ENCODE measurements at regions of chr15 and their contacts with region 1.

Region 1: DNA sequence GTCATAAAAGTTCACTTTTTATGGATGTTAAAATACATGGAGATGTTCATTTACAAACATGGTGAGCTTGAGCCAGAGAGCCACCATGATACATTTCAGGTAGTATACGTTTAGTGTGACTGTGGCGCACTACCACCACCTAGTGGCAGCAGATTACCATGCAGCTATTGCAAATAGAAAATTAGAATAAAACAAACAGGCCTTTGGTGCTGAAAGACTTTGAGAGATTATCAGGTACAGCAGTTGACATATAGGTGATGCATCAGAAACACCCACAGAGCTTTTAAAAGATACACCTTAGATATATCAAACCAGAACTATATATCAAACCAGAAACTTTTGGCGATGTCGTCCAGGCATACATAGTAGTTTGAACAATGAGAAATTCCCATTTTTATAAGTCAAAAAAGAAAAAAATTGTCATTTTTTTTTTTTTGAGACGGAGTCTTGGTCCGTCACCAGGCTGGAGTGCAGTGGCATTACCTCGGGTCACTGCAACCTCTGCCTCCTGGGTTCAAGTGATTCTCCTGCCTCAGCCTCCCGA is 42.0 kb upstream of the ICE2 start:
- DNase-seq: peak; percentile 68 to 89 (median 78)
- ATAC-seq: peak; percentile 88
- H3K4me3 ChIP-seq: no peak overlapping the region
- H3K4me3 Mint-ChIP-seq: no peak overlapping the region
- H3K27ac ChIP-seq: no peak overlapping the region
- H3K27ac Mint-ChIP-seq: peak overlapping the region; percentile 65
- H3K4me1 ChIP-seq: peaks cover 22% of the 10 kb centered on the region
- H3K4me1 Mint-ChIP-seq: peaks cover 66% of the 10 kb centered on the region
- H3K27me3 ChIP-seq: no peaks in the 10 kb centered on the region
- H3K27me3 Mint-ChIP-seq: no peaks in the 10 kb centered on the region
- CTCF ChIP-seq: peak; percentile 92

Region 2: DNA sequence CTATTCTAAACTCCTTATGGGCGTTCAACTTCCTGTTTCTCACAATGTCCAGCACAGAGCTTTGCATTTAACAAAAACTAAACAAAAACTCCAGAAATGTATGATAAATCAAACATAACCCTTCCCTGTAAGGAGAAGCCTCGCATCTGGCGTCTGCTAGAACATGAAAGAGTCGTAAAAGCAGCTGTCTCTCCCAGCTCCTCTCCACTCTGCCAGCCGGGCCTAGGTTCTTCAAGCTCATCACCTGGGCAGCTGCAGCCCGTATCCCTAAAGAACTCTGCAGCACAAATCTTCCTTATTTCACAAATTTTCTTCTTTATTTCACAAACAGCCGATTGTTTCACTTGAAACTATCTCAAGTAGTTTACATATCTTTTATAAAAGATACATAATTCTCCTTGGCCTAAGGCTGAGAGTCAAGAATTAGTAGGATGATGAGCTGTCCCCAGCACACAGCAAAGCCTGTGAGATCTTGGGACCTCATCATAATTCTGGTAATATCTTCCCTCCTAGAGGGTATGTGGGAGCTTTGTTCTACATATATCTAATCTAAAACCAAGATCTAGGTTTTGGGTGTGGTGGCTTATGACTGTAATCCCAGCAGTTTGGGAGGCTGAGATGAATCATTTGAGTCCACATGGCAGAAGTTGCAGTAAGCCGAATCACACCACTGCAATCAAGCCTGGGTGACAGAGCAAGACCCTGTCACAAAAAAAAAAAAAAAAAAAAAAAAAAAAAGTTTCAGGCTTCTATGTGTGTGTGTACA is 158.4 kb before region 1 on chr15:
- CTCF ChIA-PET with region 1: interaction called, 4 read pairs
- POLR2A ChIA-PET with region 1: no interaction called
- intact Hi-C with region 1: loop called in 1 of 2 experiments (anchors 2 kb)
- DNase-seq: peak in 5 of 14 experiments; percentile 6 to 50 (median 25)
- ATAC-seq: peak; percentile 75
- H3K4me3 ChIP-seq: no peak overlapping the region
- H3K4me3 Mint-ChIP-seq: no peak overlapping the region
- H3K27ac ChIP-seq: no peak overlapping the region
- H3K27ac Mint-ChIP-seq: peak overlapping the region; percentile 62
- H3K4me1 ChIP-seq: peaks cover 15% of the 10 kb centered on the region
- H3K4me1 Mint-ChIP-seq: peaks cover 19% of the 10 kb centered on the region
- H3K27me3 ChIP-seq: no peaks in the 10 kb centered on the region
- H3K27me3 Mint-ChIP-seq: no peaks in the 10 kb centered on the region
- CTCF ChIP-seq: no peak

Region 3: GRCh38 chr15:60536314-60536713 is 15.4 kb after region 1 on chr15:
- CTCF ChIA-PET with region 1: interaction called, 16 read pairs
- POLR2A ChIA-PET with region 1: interaction called, 4 read pairs
- intact Hi-C with region 1: no loop called
- DNase-seq: no peak
- ATAC-seq: no peak
- H3K4me3 ChIP-seq: no peak overlapping the region
- H3K4me3 Mint-ChIP-seq: no peak overlapping the region
- H3K27ac ChIP-seq: no peak overlapping the region
- H3K27ac Mint-ChIP-seq: no peak overlapping the region
- H3K4me1 ChIP-seq: peaks cover 39% of the 10 kb centered on the region
- H3K4me1 Mint-ChIP-seq: peaks cover 96% of the 10 kb centered on the region
- H3K27me3 ChIP-seq: no peaks in the 10 kb centered on the region
- H3K27me3 Mint-ChIP-seq: no peaks in the 10 kb centered on the region
- CTCF ChIP-seq: no peak

Region 4: GRCh38 chr15:60541481-60542299 is 20.8 kb after region 1 on chr15:
- CTCF ChIA-PET with region 1: interaction called, 10 read pairs
- POLR2A ChIA-PET with region 1: interaction called, 4 read pairs
- intact Hi-C with region 1: loop called in 1 of 2 experiments (anchors 2 kb)
- DNase-seq: no peak
- ATAC-seq: no peak
- H3K4me3 ChIP-seq: no peak overlapping the region
- H3K4me3 Mint-ChIP-seq: peak overlapping the region; percentile 57
- H3K27ac ChIP-seq: peak overlapping the region in 1 of 2 donors; percentile 50
- H3K27ac Mint-ChIP-seq: peak overlapping the region; percentile 85
- H3K4me1 ChIP-seq: peaks cover 62% of the 10 kb centered on the region
- H3K4me1 Mint-ChIP-seq: peaks cover 100% of the 10 kb centered on the region
- H3K27me3 ChIP-seq: no peaks in the 10 kb centered on the region
- H3K27me3 Mint-ChIP-seq: no peaks in the 10 kb centered on the region
- CTCF ChIP-seq: no peak

Region 5: GRCh38 chr15:60548101-60548500 is 27.2 kb after region 1 on chr15:
- CTCF ChIA-PET with region 1: interaction called, 15 read pairs
- POLR2A ChIA-PET with region 1: interaction called, 6 read pairs
- intact Hi-C with region 1: loop called in 1 of 2 experiments (anchors 2 kb)
- DNase-seq: peak in 5 of 14 experiments; percentile 34 to 69 (median 65)
- ATAC-seq: peak; percentile 57
- H3K4me3 ChIP-seq: peak overlapping the region; percentile 27
- H3K4me3 Mint-ChIP-seq: peak overlapping the region; percentile 71
- H3K27ac ChIP-seq: peak overlapping the region; percentile 2 to 65
- H3K27ac Mint-ChIP-seq: peak overlapping the region; percentile 85
- H3K4me1 ChIP-seq: peaks cover 74% of the 10 kb centered on the region
- H3K4me1 Mint-ChIP-seq: peaks cover 94% of the 10 kb centered on the region
- H3K27me3 ChIP-seq: no peaks in the 10 kb centered on the region
- H3K27me3 Mint-ChIP-seq: no peaks in the 10 kb centered on the region
- CTCF ChIP-seq: no peak

Region 6: DNA sequence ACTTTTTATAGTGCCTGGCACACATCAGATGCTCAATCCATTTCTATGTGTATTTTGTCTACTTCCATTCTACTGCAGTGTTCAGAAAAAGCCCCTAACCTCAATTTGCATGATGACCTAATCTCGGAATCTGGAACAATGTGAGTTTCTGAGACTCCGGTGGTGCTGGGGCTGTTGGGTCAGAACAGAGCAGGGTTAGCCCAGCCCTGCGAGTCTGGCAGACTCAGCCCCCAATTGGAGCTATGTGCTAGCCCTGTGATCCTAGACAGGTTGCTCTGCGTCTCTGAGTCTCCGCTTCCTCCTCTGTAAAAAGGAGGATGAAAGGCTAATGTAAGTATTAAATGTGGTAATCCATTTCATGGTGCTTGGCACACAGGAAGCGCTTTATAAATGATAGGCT is 53.0 kb after region 1 on chr15:
- CTCF ChIA-PET with region 1: interaction called, 10 read pairs
- POLR2A ChIA-PET with region 1: no interaction called
- intact Hi-C with region 1: loop called in 1 of 2 experiments (anchors 5 kb)
- DNase-seq: peak in 8 of 14 experiments; percentile 25 to 88 (median 60)
- ATAC-seq: peak; percentile 83
- H3K4me3 ChIP-seq: peak overlapping the region; percentile 24
- H3K4me3 Mint-ChIP-seq: peak overlapping the region; percentile 80
- H3K27ac ChIP-seq: peak overlapping the region; percentile 58 to 59
- H3K27ac Mint-ChIP-seq: peak overlapping the region; percentile 84
- H3K4me1 ChIP-seq: peaks cover 83% of the 10 kb centered on the region
- H3K4me1 Mint-ChIP-seq: peaks cover 92% of the 10 kb centered on the region
- H3K27me3 ChIP-seq: no peaks in the 10 kb centered on the region
- H3K27me3 Mint-ChIP-seq: no peaks in the 10 kb centered on the region
- CTCF ChIP-seq: no peak

Region 7: GRCh38 chr15:61335998-61336638 is 815.2 kb after region 1 on chr15:
- CTCF ChIA-PET with region 1: no interaction called
- POLR2A ChIA-PET with region 1: no interaction called
- intact Hi-C with region 1: no loop called
- DNase-seq: no peak
- ATAC-seq: no peak
- H3K4me3 ChIP-seq: no peak overlapping the region
- H3K4me3 Mint-ChIP-seq: no peak overlapping the region
- H3K27ac ChIP-seq: no peak overlapping the region
- H3K27ac Mint-ChIP-seq: no peak overlapping the region
- H3K4me1 ChIP-seq: no peaks in the 10 kb centered on the region
- H3K4me1 Mint-ChIP-seq: no peaks in the 10 kb centered on the region
- H3K27me3 ChIP-seq: peaks cover 0 to 14% of the 10 kb centered on the region in 2 experiments
- H3K27me3 Mint-ChIP-seq: peaks cover 56% of the 10 kb centered on the region
- CTCF ChIP-seq: no peak

Measured in CD4-positive, alpha-beta T cell (primary cell).